GM12878 (cell line): ENCODE measurements at regions of chr6 and their contacts with region 1.

Region 1: GRCh38 chr6:99520855-99521632 is 5.8 kb upstream of the USP45 start:
- DNase-seq: no peak
- ATAC-seq: peak; percentile 94
- H3K4me3 ChIP-seq: peak overlapping the region; percentile 88
- H3K27ac ChIP-seq: peak overlapping the region; percentile 79
- H3K4me1 ChIP-seq: peaks cover 4% of the 10 kb centered on the region; the same call in 1 of the 2 replicates
- H3K27me3 ChIP-seq: no peaks in the 10 kb centered on the region
- CTCF ChIP-seq: peak; percentile 76 to 91 (median 80)
- EP300 ChIP-seq: no peak
- POLR2A ChIP-seq: peak; percentile 92
- RAD21 ChIP-seq: peak; percentile 58

Region 2: DNA sequence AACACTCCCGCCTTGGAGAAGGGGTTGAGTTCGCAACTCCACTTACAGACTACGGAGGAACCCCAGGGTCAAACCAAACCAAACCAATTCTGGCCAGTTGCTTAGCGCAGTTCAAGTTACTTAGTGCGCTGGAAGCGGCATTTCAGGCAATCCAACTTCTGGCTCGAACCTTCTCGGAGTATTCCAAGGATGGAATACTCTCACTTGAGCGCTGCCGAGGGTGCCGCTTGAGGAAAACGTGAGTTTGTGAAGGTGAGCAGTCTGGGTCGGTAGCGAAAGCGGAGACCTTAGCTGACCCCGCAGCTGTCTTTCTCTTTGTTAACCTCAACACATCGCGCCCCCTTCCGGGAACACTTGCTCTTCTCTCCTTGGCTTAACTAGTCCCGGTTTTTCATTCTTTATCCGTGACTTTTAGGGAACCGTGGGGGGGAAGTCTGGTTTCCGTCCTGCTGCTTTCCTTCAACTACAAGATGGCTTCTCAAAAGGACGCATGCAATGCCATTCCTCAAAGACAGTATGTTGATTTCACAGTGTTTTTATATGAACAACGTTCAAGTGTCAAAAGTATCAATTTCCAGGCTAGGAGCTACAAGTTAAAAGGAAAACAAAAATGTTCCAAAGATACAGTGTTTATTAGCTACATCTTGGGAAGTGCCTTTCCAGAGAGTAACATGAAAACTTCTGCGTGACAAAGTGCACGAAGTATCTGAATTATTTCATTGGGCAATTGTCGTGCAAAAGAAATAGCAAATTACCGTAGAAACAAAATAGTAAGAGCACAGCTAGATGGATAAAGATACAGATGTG is 95.2 kb before region 1 on chr6:
- CTCF ChIA-PET with region 1: interaction called, 13 read pairs
- POLR2A ChIA-PET with region 1: interaction called, 5 read pairs
- RAD21 ChIA-PET with region 1: interaction called, 3 read pairs
- SMC1A ChIA-PET with region 1: interaction called, 3 read pairs
- in situ Hi-C with region 1: no loop called
- intact Hi-C with region 1: loop called (anchors 2 kb)
- DNase-seq: no peak
- ATAC-seq: peak; percentile 57
- H3K4me3 ChIP-seq: peak overlapping the region; percentile 94
- H3K27ac ChIP-seq: peak overlapping the region; percentile 95
- H3K4me1 ChIP-seq: peaks cover 15% of the 10 kb centered on the region
- H3K27me3 ChIP-seq: no peaks in the 10 kb centered on the region
- CTCF ChIP-seq: peak; percentile 44 to 49 (median 48); a peak in 4 of 6 replicates
- EP300 ChIP-seq: peak in 1 of 2 experiments; percentile 13; a peak in 1 of 4 replicates
- POLR2A ChIP-seq: no peak; the same call in 1 of the 2 replicates
- RAD21 ChIP-seq: peak; percentile 53

Region 3: GRCh38 chr6:99467509-99468106 is 53.4 kb before region 1 on chr6:
- CTCF ChIA-PET with region 1: interaction called, 11 read pairs
- POLR2A ChIA-PET with region 1: no interaction called
- RAD21 ChIA-PET with region 1: interaction called, 4 read pairs
- SMC1A ChIA-PET with region 1: interaction called, 4 read pairs
- in situ Hi-C with region 1: no loop called
- intact Hi-C with region 1: no loop called
- DNase-seq: no peak
- ATAC-seq: peak; percentile 64
- H3K4me3 ChIP-seq: no peak overlapping the region
- H3K27ac ChIP-seq: no peak overlapping the region
- H3K4me1 ChIP-seq: no peaks in the 10 kb centered on the region
- H3K27me3 ChIP-seq: no peaks in the 10 kb centered on the region
- CTCF ChIP-seq: peak; percentile 51 to 71 (median 56)
- EP300 ChIP-seq: no peak
- POLR2A ChIP-seq: no peak
- RAD21 ChIP-seq: peak; percentile 92

Region 4: GRCh38 chr6:99485395-99485773 is 35.7 kb before region 1 on chr6:
- CTCF ChIA-PET with region 1: interaction called, 6 read pairs
- POLR2A ChIA-PET with region 1: interaction called, 14 read pairs
- RAD21 ChIA-PET with region 1: interaction called, 7 read pairs
- SMC1A ChIA-PET with region 1: interaction called, 11 read pairs
- in situ Hi-C with region 1: no loop called
- intact Hi-C with region 1: loop called (anchors 2 kb)
- DNase-seq: no peak
- ATAC-seq: peak; percentile 58
- H3K4me3 ChIP-seq: no peak overlapping the region
- H3K27ac ChIP-seq: peak overlapping the region; percentile 68
- H3K4me1 ChIP-seq: peaks cover 14% of the 10 kb centered on the region
- H3K27me3 ChIP-seq: no peaks in the 10 kb centered on the region
- CTCF ChIP-seq: no peak
- EP300 ChIP-seq: no peak
- POLR2A ChIP-seq: no peak
- RAD21 ChIP-seq: no peak

Region 5: GRCh38 chr6:99568103-99568933 is 47.3 kb after region 1 on chr6 and contains the start of gene CCNC:
- CTCF ChIA-PET with region 1: interaction called, 5 read pairs
- POLR2A ChIA-PET with region 1: interaction called, 25 read pairs
- RAD21 ChIA-PET with region 1: interaction called, 5 read pairs
- SMC1A ChIA-PET with region 1: interaction called, 7 read pairs
- in situ Hi-C with region 1: no loop called
- intact Hi-C with region 1: loop called (anchors 1 kb)
- DNase-seq: peak; percentile 76
- ATAC-seq: peak; percentile 96
- H3K4me3 ChIP-seq: peak within 1 kb of the TSS; percentile 88
- H3K27ac ChIP-seq: peak within 1 kb of the TSS; percentile 80
- H3K4me1 ChIP-seq: no peaks in the 10 kb centered on the region; the same call in 1 of the 2 replicates
- H3K27me3 ChIP-seq: no peaks in the 10 kb centered on the region
- CTCF ChIP-seq: no peak
- EP300 ChIP-seq: no peak
- POLR2A ChIP-seq: peak; percentile 96
- RAD21 ChIP-seq: 0 out of 2 replicates have a peak, but pooled peaks have one; percentile 2
- polyA plus RNA-seq, gene CCNC: 82.3 to 168 TPM

Region 6: DNA sequence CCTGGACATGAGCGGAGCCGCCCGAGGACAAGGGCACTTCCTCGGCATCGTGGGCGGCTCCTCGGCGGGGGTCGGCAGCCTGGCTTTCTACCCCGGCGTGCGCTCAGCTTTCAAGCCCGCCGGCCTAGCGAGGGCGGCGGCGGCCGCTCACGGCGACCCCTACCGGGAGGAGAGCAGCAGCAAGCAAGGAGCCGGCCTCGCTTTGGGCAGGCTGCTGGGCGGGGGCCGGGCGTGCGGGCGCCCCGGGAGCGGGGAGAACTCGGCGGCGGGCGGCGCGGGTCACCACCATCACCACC is 92.3 kb after region 1 on chr6:
- CTCF ChIA-PET with region 1: no interaction called
- POLR2A ChIA-PET with region 1: no interaction called
- RAD21 ChIA-PET with region 1: no interaction called
- SMC1A ChIA-PET with region 1: no interaction called
- in situ Hi-C with region 1: no loop called
- intact Hi-C with region 1: loop called (anchors 5 kb)
- DNase-seq: no peak
- ATAC-seq: peak; percentile 66
- H3K4me3 ChIP-seq: peak overlapping the region; percentile 49; the same call in 1 of the 2 replicates
- H3K27ac ChIP-seq: no peak overlapping the region
- H3K4me1 ChIP-seq: peaks cover 19% of the 10 kb centered on the region
- H3K27me3 ChIP-seq: peaks cover 3 to 20% of the 10 kb centered on the region in 2 experiments
- CTCF ChIP-seq: peak; percentile 34 to 55 (median 38); a peak in 5 of 6 replicates
- EP300 ChIP-seq: no peak
- POLR2A ChIP-seq: no peak
- RAD21 ChIP-seq: peak; percentile 24; the same call in 1 of the 2 replicates